GM18951 (cell line): ENCODE measurements at regions of chr12 and their contacts with region 1.

Region 1: GRCh38 chr12:94101738-94102660 is 46.4 kb upstream of the PLXNC1 start:
- POLR2A ChIP-seq: no peak

Region 2: GRCh38 chr12:93722835-93723538 is 379.0 kb before region 1 on chr12:
- in situ Hi-C with region 1: no loop called
- POLR2A ChIP-seq: no peak

Region 3: GRCh38 chr12:93751864-93752610 is 350.0 kb before region 1 on chr12:
- in situ Hi-C with region 1: loop called (anchors 10 kb)
- POLR2A ChIP-seq: no peak